Psoas muscle (tissue), 8 donors: ENCODE measurements at regions of chr9 and their contacts with region 1.

Region 1: DNA sequence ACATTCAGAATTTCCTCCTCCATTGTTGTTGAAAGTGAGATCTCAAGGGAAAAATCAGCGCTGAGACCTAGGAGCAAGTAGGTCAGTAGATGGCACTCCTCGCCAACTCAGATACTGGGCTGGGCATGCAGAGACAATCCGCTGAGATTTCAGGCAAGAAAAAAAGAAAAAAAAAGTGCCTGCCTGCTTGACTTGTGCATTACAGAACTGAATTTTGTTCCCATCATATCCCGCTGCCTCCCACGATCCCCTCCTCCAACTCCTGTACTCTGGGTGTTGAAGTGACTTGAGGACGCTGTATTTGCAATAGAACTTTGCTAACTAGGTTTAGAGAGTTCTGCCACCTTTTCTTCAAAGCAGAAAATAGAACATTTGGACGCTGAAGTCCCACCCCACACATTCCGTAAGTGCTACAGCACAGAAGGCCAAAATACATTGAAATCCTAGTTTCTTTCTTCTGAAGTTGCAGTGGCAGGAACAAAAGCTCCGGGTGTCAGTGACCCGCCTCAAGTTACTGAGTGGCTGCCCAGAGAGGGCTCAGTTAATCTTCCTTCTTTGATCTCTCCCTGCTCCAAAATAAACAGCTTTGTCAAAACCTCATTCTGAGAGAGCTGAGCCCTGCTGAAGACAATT is 265.8 kb downstream of the MLLT3 start:
- DNase-seq: peak; percentile 33 to 73
- ATAC-seq: peak; percentile 77 to 88 (median 81)
- H3K4me3 ChIP-seq: peak overlapping the region; percentile 51
- H3K27ac ChIP-seq: peak overlapping the region; percentile 24
- H3K4me1 ChIP-seq: peaks cover 24% of the 10 kb centered on the region
- H3K27me3 ChIP-seq: no peaks in the 10 kb centered on the region
- CTCF ChIP-seq: peak; percentile 65

Region 2: GRCh38 chr9:19925817-19926503 is 430.6 kb before region 1 on chr9:
- intact Hi-C with region 1: loop called in 1 of 2 experiments (anchors 5 kb)
- DNase-seq: peak; percentile 52 to 71
- ATAC-seq: peak; percentile 85 to 98 (median 94)
- H3K4me3 ChIP-seq: peak overlapping the region; percentile 60
- H3K27ac ChIP-seq: no peak overlapping the region
- H3K4me1 ChIP-seq: no peaks in the 10 kb centered on the region
- H3K27me3 ChIP-seq: peaks cover 0 to 2% (median 0%) of the 10 kb centered on the region in 3 donors
- CTCF ChIP-seq: peak; percentile 97

Region 3: DNA sequence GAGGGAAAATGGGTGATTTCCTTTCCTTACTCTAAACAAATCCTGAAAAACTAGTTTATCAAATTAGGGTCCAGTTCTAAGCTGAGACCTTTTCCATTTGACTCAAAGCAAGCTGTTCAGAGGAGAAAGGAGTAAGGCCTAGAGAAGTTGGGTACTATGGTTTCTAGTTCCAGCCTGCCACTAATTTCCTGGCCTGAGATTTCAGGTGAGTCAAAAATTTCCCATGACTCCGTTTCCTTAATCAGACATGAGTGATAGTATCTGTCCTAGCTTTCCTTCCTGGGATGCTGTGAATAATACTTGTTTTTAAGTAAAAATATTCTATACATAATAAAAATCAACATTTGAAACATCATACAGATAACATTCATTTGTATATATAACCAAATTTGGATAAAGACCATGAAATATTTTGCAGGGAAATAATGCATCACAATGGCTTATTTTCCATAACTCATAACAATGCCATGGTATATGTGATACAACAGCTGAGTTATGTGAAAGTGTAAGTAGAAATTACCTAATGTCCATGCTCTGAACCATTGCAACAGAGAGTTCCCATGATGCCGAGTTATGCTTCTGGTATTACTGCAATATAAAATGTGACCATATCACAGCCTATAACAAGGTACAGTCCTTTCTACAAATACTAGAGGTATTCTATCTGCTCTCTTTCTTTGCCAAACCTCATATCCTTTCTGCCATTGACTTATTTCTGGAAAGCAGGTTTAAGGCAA is 123.1 kb after region 1 on chr9:
- intact Hi-C with region 1: loop called in 1 of 2 experiments (anchors 5 kb)
- DNase-seq: no peak
- ATAC-seq: no peak
- H3K4me3 ChIP-seq: no peak overlapping the region
- H3K27ac ChIP-seq: no peak overlapping the region
- H3K4me1 ChIP-seq: peaks cover 14% of the 10 kb centered on the region
- H3K27me3 ChIP-seq: no peaks in the 10 kb centered on the region
- CTCF ChIP-seq: no peak

Region 4: GRCh38 chr9:20941174-20941690 is 584.7 kb after region 1 on chr9:
- intact Hi-C with region 1: loop called (anchors 2 to 5 kb)
- DNase-seq: no peak
- ATAC-seq: peak; percentile 66 to 95 (median 90)
- H3K4me3 ChIP-seq: no peak overlapping the region
- H3K27ac ChIP-seq: no peak overlapping the region
- H3K4me1 ChIP-seq: no peaks in the 10 kb centered on the region
- H3K27me3 ChIP-seq: no peaks in the 10 kb centered on the region
- CTCF ChIP-seq: peak; percentile 85

Region 5: GRCh38 chr9:21110708-21111576 is 754.4 kb after region 1 on chr9:
- intact Hi-C with region 1: loop called (anchors 10 kb)
- DNase-seq: no peak
- ATAC-seq: peak in 3 of 4 donors; percentile 66 to 86 (median 81)
- H3K4me3 ChIP-seq: no peak overlapping the region
- H3K27ac ChIP-seq: no peak overlapping the region
- H3K4me1 ChIP-seq: no peaks in the 10 kb centered on the region
- H3K27me3 ChIP-seq: no peaks in the 10 kb centered on the region
- CTCF ChIP-seq: peak; percentile 77